Transverse colon (tissue), 4 donors: ENCODE measurements at regions of chr3 and their contacts with region 1.

Region 1: GRCh38 chr3:194339356-194339755 is 11.8 kb downstream of the CPN2 start:
- DNase-seq: no peak
- H3K4me3 ChIP-seq: no peak overlapping the region
- H3K27ac ChIP-seq: no peak overlapping the region
- H3K4me1 ChIP-seq: no peaks in the 10 kb centered on the region
- H3K27me3 ChIP-seq: peaks cover 4% of the 10 kb centered on the region
- CTCF ChIP-seq: no peak
- EP300 ChIP-seq: no peak
- POLR2A ChIP-seq: no peak

Region 2: DNA sequence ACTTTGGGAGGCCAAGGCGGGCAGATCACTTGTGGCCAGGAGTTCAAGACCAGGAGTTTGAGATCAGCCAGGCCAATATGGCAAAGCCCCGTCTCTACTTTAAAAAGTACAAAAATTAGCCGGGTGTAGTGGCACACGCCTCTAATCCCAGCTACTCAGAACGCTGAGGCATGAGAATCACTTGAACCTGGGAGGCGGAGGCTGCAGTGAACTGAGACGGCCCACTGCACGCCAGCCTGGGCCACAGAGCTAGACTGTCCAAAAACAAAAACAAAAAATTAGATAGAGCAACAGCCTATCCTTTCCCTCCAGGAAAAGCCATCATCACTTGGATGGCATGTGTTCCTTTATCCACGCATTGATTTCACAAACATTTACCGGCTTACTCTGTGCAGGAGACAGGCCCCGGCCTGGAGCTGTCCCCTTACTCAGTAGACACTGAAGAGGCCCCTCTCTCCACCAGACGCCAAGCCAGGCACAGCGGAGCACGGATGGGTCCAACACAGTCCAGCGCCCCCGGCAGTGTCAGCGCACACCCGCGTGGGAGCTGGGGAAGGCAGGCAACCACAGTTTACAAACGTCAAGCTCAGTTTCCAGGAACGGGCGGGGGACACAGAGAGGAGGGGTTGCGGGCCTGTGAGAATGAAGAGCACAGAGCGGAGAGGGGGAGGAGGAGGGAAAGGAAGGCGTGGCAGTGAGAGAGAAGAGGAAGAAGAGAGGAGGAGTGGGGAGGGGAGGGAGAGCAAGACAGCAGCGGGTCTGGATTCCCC is 56.6 kb after region 1 on chr3:
- in situ Hi-C with region 1: loop called in 1 of 4 experiments (anchors 5 kb)
- intact Hi-C with region 1: no loop called
- DNase-seq: peak; percentile 41
- H3K4me3 ChIP-seq: peak overlapping the region in 1 of 4 donors; percentile 24
- H3K27ac ChIP-seq: peak overlapping the region; percentile 32 to 68 (median 50)
- H3K4me1 ChIP-seq: peaks cover 0 to 34% (median 13%) of the 10 kb centered on the region in 4 donors
- H3K27me3 ChIP-seq: peaks cover 20% of the 10 kb centered on the region
- CTCF ChIP-seq: no peak
- EP300 ChIP-seq: no peak
- POLR2A ChIP-seq: no peak

Region 3: GRCh38 chr3:194404365-194405140 is 65.2 kb after region 1 on chr3:
- in situ Hi-C with region 1: loop called in 3 of 4 experiments (anchors 5 kb)
- intact Hi-C with region 1: loop called (anchors 5 kb)
- DNase-seq: peak; percentile 38
- H3K4me3 ChIP-seq: no peak overlapping the region
- H3K27ac ChIP-seq: peak overlapping the region in 1 of 4 donors; percentile 5
- H3K4me1 ChIP-seq: no peaks in the 10 kb centered on the region
- H3K27me3 ChIP-seq: no peaks in the 10 kb centered on the region
- CTCF ChIP-seq: peak; percentile 63 to 82 (median 76)
- EP300 ChIP-seq: no peak
- POLR2A ChIP-seq: no peak